ENCODE measurements at regions of chr7 and their contacts with region 1.

Region 1: DNA sequence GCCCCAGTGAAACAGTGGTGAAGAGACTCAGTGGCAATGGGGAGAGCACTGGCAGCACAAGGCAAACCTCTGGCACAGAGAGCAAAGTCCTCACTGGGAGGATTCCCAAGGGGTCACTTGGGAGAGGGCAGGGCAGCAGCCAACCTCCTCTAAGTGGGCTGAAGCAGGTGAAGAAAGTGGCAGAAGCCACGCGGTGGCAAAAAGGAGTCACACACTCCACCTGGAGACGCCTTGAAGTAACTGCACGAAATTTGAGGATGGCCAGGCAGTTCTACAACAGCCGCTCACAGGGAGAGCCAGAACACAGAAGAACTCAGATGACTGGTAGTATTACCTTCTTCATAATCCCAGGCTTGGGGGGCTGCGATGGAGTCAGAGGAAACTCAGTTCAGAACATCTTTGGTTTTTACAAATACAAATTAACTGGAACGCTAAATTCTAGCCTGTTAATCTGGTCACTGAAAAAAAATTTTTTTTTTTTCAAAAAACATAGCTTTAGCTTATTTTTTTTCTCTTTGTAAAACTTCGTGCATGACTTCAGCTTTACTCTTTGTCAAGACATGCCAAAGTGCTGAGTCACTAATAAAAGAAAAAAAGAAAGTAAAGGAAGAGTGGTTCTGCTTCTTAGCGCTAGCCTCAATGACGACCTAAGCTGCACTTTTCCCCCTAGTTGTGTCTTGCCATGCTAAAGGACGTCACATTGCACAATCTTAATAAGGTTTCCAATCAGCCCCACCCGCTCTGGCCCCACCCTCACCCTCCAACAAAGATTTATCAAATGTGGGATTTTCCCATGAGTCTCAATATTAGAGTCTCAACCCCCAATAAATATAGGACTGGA is 435 bp upstream of the IL6 start:
- DNase-seq: peak; percentile 67
- ATAC-seq: peak; percentile 52

Region 2: DNA sequence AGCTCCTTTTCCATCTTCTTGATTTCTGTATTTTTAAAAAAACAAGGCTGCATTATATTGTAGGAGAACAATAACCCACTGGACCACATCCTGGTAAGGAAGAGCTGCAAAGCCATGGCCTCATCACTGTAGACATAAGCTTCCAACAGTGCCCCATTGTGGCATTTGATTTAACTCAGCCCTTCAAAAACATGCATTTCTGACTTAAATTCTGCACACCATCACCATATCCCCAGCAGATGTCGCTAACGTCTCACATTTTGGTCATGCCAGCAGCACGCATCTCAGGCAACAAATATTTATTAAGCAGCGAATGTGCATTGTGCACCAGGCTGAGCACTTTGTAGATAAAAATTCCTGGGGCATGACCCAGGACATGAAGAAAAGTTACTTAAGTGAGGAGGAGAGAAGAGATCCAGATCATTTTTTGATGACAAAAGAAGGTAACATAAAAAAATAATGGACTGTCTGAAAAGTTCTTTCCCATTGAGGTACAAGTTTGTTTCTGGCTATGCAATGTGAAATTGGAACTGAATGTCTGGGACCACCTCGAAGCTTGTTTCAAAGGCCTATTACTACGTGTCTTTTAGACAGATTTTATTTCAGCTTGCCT is 616.2 kb before region 1 on chr7:
- intact Hi-C with region 1: no loop called
- DNase-seq: no peak
- ATAC-seq: peak; percentile 73

Region 3: DNA sequence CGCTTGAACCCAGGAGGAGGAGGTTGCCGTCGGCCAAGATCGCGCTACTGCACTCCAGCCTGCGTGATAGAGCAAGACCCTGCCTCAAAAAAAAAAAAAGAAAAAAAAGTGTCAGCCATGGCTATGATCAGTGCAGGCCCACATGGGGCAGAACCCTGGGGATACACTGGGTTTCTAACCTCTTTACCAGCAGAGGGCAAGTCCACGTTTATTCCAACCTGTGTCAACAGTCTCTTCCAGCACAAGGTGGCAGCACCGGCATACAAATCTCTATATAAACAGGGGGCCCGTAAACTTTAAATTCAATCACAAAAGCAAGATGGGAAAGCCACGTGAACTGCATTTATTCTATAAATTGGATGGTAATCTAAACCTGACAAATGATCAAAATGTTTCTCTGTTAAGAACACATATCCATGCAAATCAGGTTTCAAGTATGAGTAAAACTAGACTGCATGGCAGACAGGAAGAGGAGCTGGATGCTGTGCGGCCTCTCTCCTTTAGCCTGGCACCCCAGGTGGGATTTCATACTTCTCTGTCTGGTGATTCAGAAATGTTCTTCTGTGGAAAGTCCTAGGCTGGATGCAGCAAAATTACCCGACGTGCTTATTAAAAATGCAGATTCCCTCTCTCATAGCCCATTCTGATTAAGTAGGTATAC is 166.6 kb before region 1 on chr7:
- intact Hi-C with region 1: loop called (anchors 1 kb)
- DNase-seq: peak; percentile 79
- ATAC-seq: peak; percentile 73

Region 4: GRCh38 chr7:22577396-22578001 is 149.1 kb before region 1 on chr7:
- intact Hi-C with region 1: loop called (anchors 5 kb)
- DNase-seq: no peak
- ATAC-seq: peak; percentile 93

Region 5: GRCh38 chr7:22651534-22652243 is 74.9 kb before region 1 on chr7:
- intact Hi-C with region 1: loop called (anchors 5 kb)
- DNase-seq: no peak
- ATAC-seq: no peak

Region 6: GRCh38 chr7:22782616-22783232 is 56.2 kb after region 1 on chr7:
- intact Hi-C with region 1: loop called (anchors 5 kb)
- DNase-seq: no peak
- ATAC-seq: peak; percentile 32

Region 7: DNA sequence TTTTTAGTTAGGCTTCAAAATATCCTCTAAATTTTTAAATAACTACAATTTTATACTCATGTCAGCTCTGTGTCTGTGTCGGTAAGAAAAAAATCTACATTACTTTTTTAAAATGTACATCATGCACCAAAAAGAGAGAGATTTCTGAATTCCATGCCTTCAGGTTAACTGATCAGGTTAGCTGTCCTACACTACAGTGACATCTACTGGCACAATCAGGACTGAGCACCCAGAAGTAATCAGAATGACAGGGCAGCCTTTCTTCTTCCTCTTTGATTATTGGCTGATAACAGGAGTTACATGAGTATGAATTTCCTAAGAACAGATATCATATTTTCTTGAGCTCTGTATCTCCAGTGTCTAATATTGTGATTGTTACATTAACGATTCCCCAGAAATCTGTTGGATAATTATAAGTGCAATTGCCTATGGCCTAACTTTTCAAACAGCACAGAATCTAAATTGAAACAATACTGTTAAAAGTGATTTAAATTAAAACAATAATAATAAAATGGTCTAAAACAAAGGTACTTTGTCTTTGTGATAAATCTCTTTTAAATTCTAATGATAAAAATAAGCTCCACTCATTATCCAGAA is 329.1 kb after region 1 on chr7:
- intact Hi-C with region 1: loop called (anchors 5 kb)
- DNase-seq: no peak
- ATAC-seq: peak; percentile 67

Measured in Right ventricle myocardium inferior (tissue), 1 donor.